HCT116 (cell line): ENCODE measurements at regions of chr15 and their contacts with region 1.

Region 1: GRCh38 chr15:29139540-29140459 is 129.8 kb downstream of the NSMCE3 start:
- DNase-seq: peak; percentile 16
- ATAC-seq: peak; percentile 99
- H3K4me3 ChIP-seq: peak overlapping the region in 1 of 2 experiments; percentile 17; a peak in 2 of 4 replicates
- H3K27ac ChIP-seq: no peak overlapping the region
- H3K4me1 ChIP-seq: peaks cover 2 to 8% of the 10 kb centered on the region in 2 experiments; a peak in 1 of 4 replicates
- H3K27me3 ChIP-seq: peaks cover 20% of the 10 kb centered on the region; the same call in 1 of the 2 replicates
- CTCF ChIP-seq: peak; percentile 21 to 99 (median 85); a peak in 5 of 6 replicates
- POLR2A ChIP-seq: no peak
- RAD21 ChIP-seq: peak; percentile 53

Region 2: GRCh38 chr15:29124581-29125381 is 15.0 kb before region 1 on chr15:
- CTCF ChIA-PET with region 1: interaction called, 19 read pairs
- POLR2A ChIA-PET with region 1: interaction called, 3 read pairs
- RAD21 ChIA-PET with region 1: no interaction called
- intact Hi-C with region 1: no loop called
- DNase-seq: peak; percentile 73
- ATAC-seq: peak; percentile 87
- H3K4me3 ChIP-seq: no peak overlapping the region
- H3K27ac ChIP-seq: no peak overlapping the region
- H3K4me1 ChIP-seq: peaks cover 18 to 26% of the 10 kb centered on the region in 2 experiments
- H3K27me3 ChIP-seq: peaks cover 19% of the 10 kb centered on the region
- CTCF ChIP-seq: peak in 2 of 3 experiments; percentile 40 to 44; a peak in 4 of 6 replicates
- POLR2A ChIP-seq: no peak
- RAD21 ChIP-seq: peak; percentile 27; the same call in 1 of the 2 replicates

Region 3: DNA sequence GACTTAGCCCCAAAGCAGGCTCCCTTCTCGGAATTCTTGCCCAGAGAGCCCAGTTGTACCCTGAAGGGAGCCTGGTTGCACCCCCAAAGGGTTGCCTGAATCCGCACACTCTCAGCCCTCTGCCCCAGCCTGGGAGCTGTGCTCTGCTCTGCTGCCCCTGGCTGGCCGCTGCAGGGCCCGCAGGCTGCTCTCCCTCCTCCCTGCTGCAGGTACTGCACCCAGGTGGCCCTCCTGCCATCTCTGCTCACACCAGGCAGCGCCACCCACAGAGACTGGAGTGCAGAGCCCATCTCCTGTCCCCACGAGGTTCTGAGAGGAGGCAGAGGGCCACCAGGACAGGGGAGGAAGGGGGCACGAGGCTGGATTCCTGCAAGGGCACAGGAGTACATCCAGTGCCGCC is 264.0 kb after region 1 on chr15:
- CTCF ChIA-PET with region 1: interaction called, 3 read pairs
- POLR2A ChIA-PET with region 1: no interaction called
- RAD21 ChIA-PET with region 1: no interaction called
- intact Hi-C with region 1: loop called (anchors 10 kb)
- DNase-seq: peak; percentile 29
- ATAC-seq: peak; percentile 100
- H3K4me3 ChIP-seq: no peak overlapping the region
- H3K27ac ChIP-seq: no peak overlapping the region
- H3K4me1 ChIP-seq: no peaks in the 10 kb centered on the region; a peak in 1 of 4 replicates
- H3K27me3 ChIP-seq: peaks cover 4% of the 10 kb centered on the region
- CTCF ChIP-seq: peak; percentile 51 to 66 (median 61); a peak in 5 of 6 replicates
- POLR2A ChIP-seq: no peak
- RAD21 ChIP-seq: peak; percentile 43; the same call in 1 of the 2 replicates